Calu3 (cell line): ENCODE measurements at regions of chr15 and their contacts with region 1.

Region 1: GRCh38 chr15:61237400-61237799 is 8.3 kb upstream of the RORA start:
- DNase-seq: no peak
- H3K4me3 Mint-ChIP-seq: no peak overlapping the region
- H3K27ac Mint-ChIP-seq: no peak overlapping the region
- H3K4me1 Mint-ChIP-seq: no peaks in the 10 kb centered on the region
- H3K27me3 Mint-ChIP-seq: peaks cover 40% of the 10 kb centered on the region
- CTCF ChIP-seq: no peak

Region 2: DNA sequence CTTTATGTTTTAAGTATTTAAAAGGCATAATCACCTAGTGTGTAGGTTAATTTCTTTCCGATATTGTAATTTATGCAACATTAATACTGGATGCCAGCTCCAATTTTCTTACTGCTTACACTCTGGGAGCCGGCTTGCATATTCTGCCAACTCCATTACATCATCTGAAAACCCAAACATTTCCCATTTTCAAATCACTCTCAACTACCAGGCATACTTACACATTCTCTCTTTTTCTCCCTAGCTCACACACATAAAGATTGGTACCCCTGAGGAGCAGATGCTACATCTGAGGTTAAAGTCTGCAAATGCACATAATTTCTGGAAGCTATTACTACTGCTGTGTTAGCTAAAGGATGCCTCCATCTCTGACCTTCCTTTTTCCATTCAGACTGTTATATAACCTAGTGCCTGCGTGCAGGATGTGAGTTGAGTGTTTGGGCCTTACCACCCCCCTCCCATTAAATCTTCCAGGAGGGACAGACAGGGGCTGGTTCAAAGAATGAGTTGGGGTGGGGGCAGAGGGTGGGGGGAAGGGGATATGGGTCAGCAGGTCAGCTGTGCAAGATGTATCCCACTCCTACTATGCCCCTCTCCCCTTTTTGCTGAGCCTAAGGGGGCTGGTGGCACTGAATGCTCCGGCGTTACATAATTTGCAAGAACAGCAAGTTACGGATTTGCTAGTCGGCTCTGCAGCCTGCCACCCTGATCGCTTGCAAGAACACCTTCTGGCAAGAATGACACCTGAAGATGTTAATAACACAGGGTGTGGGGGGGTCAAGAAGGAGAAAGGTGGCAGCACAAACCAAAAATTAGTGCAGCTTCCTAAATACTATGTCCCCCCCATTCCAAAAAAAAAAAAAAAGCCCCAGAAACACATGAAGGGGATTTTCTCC is 10.8 kb before region 1 on chr15:
- CTCF ChIA-PET with region 1: interaction called, 11 read pairs
- intact Hi-C with region 1: no loop called
- DNase-seq: no peak
- H3K4me3 Mint-ChIP-seq: peak overlapping the region; percentile 67
- H3K27ac Mint-ChIP-seq: no peak overlapping the region
- H3K4me1 Mint-ChIP-seq: peaks cover 9% of the 10 kb centered on the region
- H3K27me3 Mint-ChIP-seq: peaks cover 94% of the 10 kb centered on the region
- CTCF ChIP-seq: no peak

Region 3: DNA sequence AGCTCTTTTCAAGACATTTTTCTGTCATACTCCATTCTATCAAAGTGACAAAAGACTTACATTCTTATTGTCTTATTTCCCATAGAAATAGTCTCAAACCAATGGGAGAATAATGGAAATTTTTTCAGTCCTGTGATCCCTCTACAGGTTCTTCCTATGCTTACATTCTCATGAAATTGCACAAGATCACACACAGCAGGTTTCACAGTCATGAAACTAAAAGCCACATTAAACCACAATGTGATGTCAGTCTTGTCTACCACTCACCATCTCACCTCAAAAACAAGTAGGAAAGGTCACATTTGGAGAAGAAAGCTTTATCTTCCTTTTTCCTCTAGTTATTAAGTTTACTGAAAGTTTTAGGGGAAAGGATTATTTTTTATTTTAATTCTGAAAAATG is 152.7 kb after region 1 on chr15:
- CTCF ChIA-PET with region 1: no interaction called
- intact Hi-C with region 1: no loop called
- DNase-seq: no peak
- H3K4me3 Mint-ChIP-seq: no peak overlapping the region
- H3K27ac Mint-ChIP-seq: no peak overlapping the region
- H3K4me1 Mint-ChIP-seq: no peaks in the 10 kb centered on the region
- H3K27me3 Mint-ChIP-seq: peaks cover 39% of the 10 kb centered on the region
- CTCF ChIP-seq: no peak